ENCODE measurements at regions of chr2 and their contacts with region 1.

Region 1: DNA sequence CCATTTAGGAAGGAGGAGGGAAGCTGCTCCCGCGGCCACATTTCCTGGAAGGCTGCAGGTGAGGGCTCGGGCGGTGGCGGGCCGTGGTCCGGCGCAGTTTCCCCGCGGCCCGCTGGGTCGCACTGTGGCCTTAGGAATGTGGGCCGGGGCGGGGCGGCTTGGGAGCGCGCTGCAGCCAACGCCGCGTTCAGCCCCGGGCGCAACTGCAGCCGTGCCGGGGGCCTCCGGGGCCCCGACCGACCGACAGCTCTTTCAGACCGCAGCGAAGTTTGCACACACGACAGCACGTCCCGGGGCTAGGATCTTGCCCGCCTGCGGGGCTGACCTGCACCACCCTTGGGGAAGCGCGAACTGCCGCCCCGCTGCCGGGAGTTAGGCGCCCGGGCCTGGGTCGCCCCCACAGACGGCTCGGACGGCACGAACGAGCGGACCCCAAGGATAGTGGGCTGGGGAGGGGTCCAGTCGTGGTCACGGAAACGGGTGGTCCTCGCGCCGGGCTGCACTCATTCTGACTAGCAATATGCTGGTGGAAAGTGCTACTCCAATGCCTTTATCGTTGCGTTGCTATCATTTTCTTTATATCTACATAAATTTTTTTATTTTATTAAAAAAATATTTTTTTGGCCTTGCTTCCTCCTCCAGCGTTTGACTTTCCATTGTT is 69.9 kb upstream of the DLX2 start:
- DNase-seq: peak; percentile 71
- H3K4me3 ChIP-seq: peak overlapping the region; percentile 71
- H3K27ac ChIP-seq: peak overlapping the region; percentile 27
- H3K4me1 ChIP-seq: peaks cover 12% of the 10 kb centered on the region
- H3K27me3 ChIP-seq: peaks cover 14% of the 10 kb centered on the region
- CTCF ChIP-seq: peak; percentile 91

Region 2: GRCh38 chr2:172038604-172039003 is 134.0 kb before region 1 on chr2:
- intact Hi-C with region 1: no loop called
- DNase-seq: no peak
- H3K4me3 ChIP-seq: no peak overlapping the region
- H3K27ac ChIP-seq: no peak overlapping the region
- H3K4me1 ChIP-seq: no peaks in the 10 kb centered on the region
- H3K27me3 ChIP-seq: no peaks in the 10 kb centered on the region
- CTCF ChIP-seq: no peak

Region 3: GRCh38 chr2:172131713-172132555 is 40.7 kb before region 1 on chr2:
- intact Hi-C with region 1: no loop called
- DNase-seq: no peak
- H3K4me3 ChIP-seq: no peak overlapping the region
- H3K27ac ChIP-seq: no peak overlapping the region
- H3K4me1 ChIP-seq: no peaks in the 10 kb centered on the region
- H3K27me3 ChIP-seq: peaks cover 47% of the 10 kb centered on the region
- CTCF ChIP-seq: no peak

Region 4: DNA sequence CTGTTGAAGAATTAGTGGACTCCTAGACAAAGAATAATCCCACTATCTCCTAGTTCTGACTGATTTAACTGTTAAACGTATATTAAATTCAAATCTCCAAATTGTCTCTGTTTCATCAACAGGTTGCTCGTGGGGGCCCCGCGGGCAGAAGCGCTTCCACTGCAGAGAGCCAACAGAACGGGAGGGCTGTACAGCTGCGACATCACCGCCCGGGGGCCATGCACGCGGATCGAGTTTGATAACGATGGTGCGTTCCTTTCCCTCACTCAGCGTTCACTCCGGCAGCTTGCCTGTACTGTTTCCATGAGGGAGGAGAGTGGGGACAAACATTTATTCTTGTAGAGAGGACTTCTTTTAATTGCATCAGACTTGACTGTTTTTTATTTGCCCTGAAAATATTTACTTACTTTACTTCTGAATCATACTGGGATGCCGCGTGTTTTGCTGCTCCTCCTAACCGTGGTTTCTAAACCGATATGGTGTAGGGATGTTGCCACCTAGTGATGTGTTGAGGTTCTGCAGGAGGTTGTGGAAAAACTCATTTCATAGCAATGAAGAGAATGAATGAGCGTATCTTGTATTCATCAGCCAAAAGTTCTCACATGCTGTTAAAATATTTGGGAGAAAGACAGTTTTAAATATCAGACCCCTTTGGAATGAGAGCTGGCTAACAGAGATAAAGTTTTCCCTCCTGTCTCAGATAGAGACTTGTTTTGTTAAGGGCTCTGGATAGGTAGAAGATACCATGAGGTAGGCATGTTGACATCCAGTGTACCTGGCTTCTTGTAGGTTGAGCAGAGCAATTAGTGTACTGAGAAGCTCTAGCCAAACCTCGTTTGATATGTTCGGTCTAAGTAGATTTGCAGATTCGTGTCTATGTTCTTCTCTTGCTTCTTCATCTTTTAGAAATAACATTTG is 293.0 kb after region 1 on chr2:
- intact Hi-C with region 1: loop called (anchors 5 kb)
- DNase-seq: peak; percentile 29
- H3K4me3 ChIP-seq: peak overlapping the region; percentile 47
- H3K27ac ChIP-seq: peak overlapping the region; percentile 57
- H3K4me1 ChIP-seq: peaks cover 59% of the 10 kb centered on the region
- H3K27me3 ChIP-seq: no peaks in the 10 kb centered on the region
- CTCF ChIP-seq: peak; percentile 88

Measured in left ventricle myocardium inferior (tissue), 1 donor.